H1 (cell line): ENCODE measurements at regions of chr1 and their contacts with region 1.

Region 1: GRCh38 chr1:41432481-41433280 is 51.8 kb downstream of the EDN2 start:
- DNase-seq: peak; percentile 83 to 99
- H3K4me3 ChIP-seq: no peak overlapping the region
- H3K27ac ChIP-seq: no peak overlapping the region
- H3K4me1 ChIP-seq: peaks cover 0 to 10% (median 5%) of the 10 kb centered on the region in 4 experiments; a peak in 5 of 7 replicates
- H3K27me3 ChIP-seq: no peaks in the 10 kb centered on the region
- CTCF ChIP-seq: peak; percentile 96 to 99 (median 99)
- EP300 ChIP-seq: no peak
- POLR2A ChIP-seq: no peak
- RAD21 ChIP-seq: peak; percentile 97 to 99

Region 2: GRCh38 chr1:41274752-41275545 is 157.7 kb before region 1 on chr1:
- CTCF ChIA-PET with region 1: interaction called, 75 read pairs
- POLR2A ChIA-PET with region 1: no interaction called
- DNase-seq: no peak
- H3K4me3 ChIP-seq: no peak overlapping the region
- H3K27ac ChIP-seq: no peak overlapping the region
- H3K4me1 ChIP-seq: no peaks in the 10 kb centered on the region; a peak in 1 of 7 replicates
- H3K27me3 ChIP-seq: no peaks in the 10 kb centered on the region
- CTCF ChIP-seq: no peak
- EP300 ChIP-seq: no peak
- POLR2A ChIP-seq: no peak
- RAD21 ChIP-seq: no peak

Region 3: GRCh38 chr1:41313661-41314131 is 119.0 kb before region 1 on chr1:
- CTCF ChIA-PET with region 1: interaction called, 420 read pairs
- POLR2A ChIA-PET with region 1: no interaction called
- DNase-seq: peak; percentile 29 to 70
- H3K4me3 ChIP-seq: no peak overlapping the region
- H3K27ac ChIP-seq: no peak overlapping the region
- H3K4me1 ChIP-seq: peaks cover 0 to 14% (median 2%) of the 10 kb centered on the region in 4 experiments; a peak in 4 of 7 replicates
- H3K27me3 ChIP-seq: peaks cover 0 to 2% (median 0%) of the 10 kb centered on the region in 4 experiments; a peak in 1 of 7 replicates
- CTCF ChIP-seq: peak; percentile 64 to 87 (median 81)
- EP300 ChIP-seq: no peak
- POLR2A ChIP-seq: no peak
- RAD21 ChIP-seq: peak; percentile 55 to 73

Region 4: GRCh38 chr1:41360993-41361753 is 71.5 kb before region 1 on chr1 and contains the start of gene FOXO6:
- CTCF ChIA-PET with region 1: interaction called, 76 read pairs
- POLR2A ChIA-PET with region 1: no interaction called
- DNase-seq: peak; percentile 95 to 99
- H3K4me3 ChIP-seq: peak within 1 kb of the TSS; percentile 40 to 67 (median 47)
- H3K27ac ChIP-seq: no peak within 1 kb of the TSS
- H3K4me1 ChIP-seq: peaks cover 3 to 58% (median 42%) of the 10 kb centered on the region in 4 experiments
- H3K27me3 ChIP-seq: peaks cover 21 to 38% (median 36%) of the 10 kb centered on the region in 4 experiments
- CTCF ChIP-seq: peak; percentile 73 to 85 (median 76)
- EP300 ChIP-seq: no peak
- POLR2A ChIP-seq: no peak
- RAD21 ChIP-seq: peak; percentile 68 to 84
- total RNA-seq, gene FOXO6: 3.0 and 3.8 TPM in 2 replicates

Region 5: DNA sequence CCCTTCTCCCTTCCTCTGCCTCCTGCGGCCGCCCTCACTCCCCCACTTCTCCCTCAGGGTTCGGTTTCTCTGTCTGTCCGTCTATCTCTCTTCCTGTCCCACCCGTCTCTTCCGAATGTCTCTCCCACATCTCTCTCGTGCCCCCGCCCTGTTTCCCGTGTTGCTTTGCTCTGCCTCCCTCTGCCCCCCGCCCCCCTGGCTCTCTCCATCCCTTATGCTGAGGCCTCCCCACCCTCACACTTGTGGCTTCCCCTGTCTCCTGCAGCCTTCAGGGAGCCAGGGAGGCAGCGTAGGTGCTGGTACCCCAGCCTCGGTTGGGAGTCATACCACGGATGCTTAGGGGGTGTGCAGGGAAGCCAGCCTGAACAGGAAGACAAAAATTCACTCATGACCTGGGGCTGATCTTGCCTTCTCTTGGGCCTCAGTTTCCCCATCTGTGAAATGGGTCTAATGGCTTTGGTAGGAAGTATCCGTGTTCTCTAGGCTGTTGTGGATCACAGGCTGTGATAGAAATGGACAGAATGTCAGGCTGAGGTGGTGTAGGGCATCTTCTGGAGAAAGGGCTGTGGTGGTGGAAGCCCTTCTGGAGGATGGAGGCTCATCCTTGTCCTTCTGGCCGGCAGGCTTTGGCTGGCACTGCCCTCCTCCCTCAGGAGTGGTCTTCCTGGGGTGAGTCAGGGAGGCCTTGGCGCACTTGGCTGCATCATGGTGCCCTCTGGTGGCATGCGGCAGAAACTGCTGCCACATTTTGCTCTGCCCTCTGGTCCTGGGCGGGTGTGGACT is 15.9 kb before region 1 on chr1:
- CTCF ChIA-PET with region 1: interaction called, 144 read pairs
- POLR2A ChIA-PET with region 1: interaction called, 3 read pairs
- DNase-seq: peak; percentile 58 to 87
- H3K4me3 ChIP-seq: no peak overlapping the region
- H3K27ac ChIP-seq: no peak overlapping the region
- H3K4me1 ChIP-seq: peaks cover 0 to 7% (median 1%) of the 10 kb centered on the region in 4 experiments; a peak in 2 of 7 replicates
- H3K27me3 ChIP-seq: no peaks in the 10 kb centered on the region
- CTCF ChIP-seq: peak; percentile 97 to 99 (median 98)
- EP300 ChIP-seq: no peak; a peak in 1 of 3 replicates
- POLR2A ChIP-seq: no peak
- RAD21 ChIP-seq: peak; percentile 98 to 99

Region 6: DNA sequence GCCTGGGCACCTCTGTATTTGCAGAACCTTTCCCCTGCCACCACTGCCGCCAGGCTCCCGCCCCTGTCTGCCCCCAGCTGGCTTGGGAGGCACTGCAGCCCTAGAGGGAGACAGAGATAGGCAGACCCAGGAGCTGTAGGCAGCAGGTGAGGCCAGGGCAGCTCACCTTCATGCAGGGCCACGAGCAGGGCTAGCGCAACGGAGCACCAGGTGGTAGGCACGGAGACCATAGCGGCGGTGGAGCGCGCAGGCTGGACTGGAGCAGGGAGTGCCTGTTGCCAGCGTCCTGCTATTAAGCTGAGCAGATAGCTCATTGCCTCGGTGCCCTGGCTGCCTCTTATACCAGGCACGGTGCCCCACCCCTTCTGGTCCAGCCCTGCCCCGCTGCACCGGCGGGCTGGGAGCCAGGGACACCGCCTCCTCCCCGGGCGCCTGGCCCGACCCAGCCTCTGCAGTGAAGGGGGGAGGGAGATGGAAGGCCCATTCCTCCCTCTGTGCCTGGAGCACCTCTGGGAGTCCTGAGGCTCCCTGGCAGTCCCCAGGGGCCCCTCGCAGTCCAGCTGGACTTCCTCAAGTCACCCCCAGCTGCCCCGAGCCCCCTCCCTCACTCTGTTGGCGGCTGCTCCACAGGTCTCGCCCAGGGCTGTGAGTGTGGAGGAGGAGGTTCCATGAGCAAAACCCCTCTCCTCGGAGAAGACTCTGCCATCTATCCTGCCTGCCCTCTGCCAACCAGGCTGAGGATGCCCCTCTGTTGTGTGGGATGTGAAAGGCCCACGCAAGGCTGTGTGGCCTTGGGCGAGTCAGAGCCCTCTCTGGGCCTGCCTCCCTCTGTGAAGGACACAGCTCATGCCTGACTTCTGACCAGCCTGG is 51.9 kb after region 1 on chr1 and contains the start of gene EDN2:
- CTCF ChIA-PET with region 1: interaction called, 41 read pairs
- POLR2A ChIA-PET with region 1: no interaction called
- DNase-seq: no peak
- H3K4me3 ChIP-seq: no peak within 1 kb of the TSS
- H3K27ac ChIP-seq: no peak within 1 kb of the TSS
- H3K4me1 ChIP-seq: peaks cover 13 to 31% (median 24%) of the 10 kb centered on the region in 4 experiments
- H3K27me3 ChIP-seq: peaks cover 0 to 2% (median 0%) of the 10 kb centered on the region in 4 experiments; a peak in 2 of 7 replicates
- CTCF ChIP-seq: peak in 2 of 3 experiments; percentile 64 to 68; a peak in 3 of 4 replicates
- EP300 ChIP-seq: no peak
- POLR2A ChIP-seq: no peak
- RAD21 ChIP-seq: peak; percentile 31 to 45; a peak in 3 of 4 replicates
- total RNA-seq, gene EDN2: 0.39 TPM in 1 of 2 replicates, not detected in the other

Region 7: DNA sequence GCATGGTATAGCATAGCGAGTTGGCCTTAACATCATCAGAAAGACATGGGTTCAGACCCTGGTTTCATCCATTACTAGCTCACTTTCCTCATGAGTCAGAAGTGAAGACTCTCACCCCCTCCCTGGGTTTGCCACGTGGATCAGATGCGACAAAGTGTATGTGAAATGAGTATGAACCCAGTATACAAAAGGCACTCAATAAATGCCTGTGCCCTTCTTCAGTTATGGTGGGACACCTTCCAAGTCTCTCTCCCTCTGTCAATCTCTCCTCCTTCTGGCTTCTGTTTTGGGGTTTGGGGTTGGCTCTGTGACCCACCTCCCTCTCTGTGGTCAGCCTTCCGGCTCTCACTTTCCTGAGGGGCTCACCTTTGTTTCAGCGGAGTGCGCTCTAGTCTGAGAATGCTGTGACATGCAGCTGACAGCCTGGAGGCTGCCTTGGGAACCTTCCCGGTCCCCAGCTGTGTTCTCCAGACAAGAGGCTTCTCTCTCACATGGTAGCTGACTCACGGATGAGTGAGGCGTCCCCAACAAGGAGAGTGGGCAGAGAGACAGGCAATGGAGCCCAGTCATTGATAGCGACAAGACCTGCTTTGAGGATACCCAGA is 206.8 kb after region 1 on chr1:
- CTCF ChIA-PET with region 1: no interaction called
- POLR2A ChIA-PET with region 1: no interaction called
- DNase-seq: no peak
- H3K4me3 ChIP-seq: no peak overlapping the region
- H3K27ac ChIP-seq: no peak overlapping the region
- H3K4me1 ChIP-seq: no peaks in the 10 kb centered on the region
- H3K27me3 ChIP-seq: no peaks in the 10 kb centered on the region
- CTCF ChIP-seq: no peak
- EP300 ChIP-seq: no peak
- POLR2A ChIP-seq: no peak
- RAD21 ChIP-seq: no peak